Testis (tissue), 5 donors: ENCODE measurements at regions of chr4 and their contacts with region 1.

Region 1: GRCh38 chr4:53702334-53703266 is 111.3 kb upstream of the LNX1 start:
- DNase-seq: peak; percentile 85
- H3K4me3 ChIP-seq: no peak overlapping the region
- H3K27ac ChIP-seq: peak overlapping the region; percentile 45 to 51
- H3K4me1 ChIP-seq: peaks cover 17% of the 10 kb centered on the region
- H3K27me3 ChIP-seq: no peaks in the 10 kb centered on the region
- CTCF ChIP-seq: no peak
- POLR2A ChIP-seq: no peak

Region 2: DNA sequence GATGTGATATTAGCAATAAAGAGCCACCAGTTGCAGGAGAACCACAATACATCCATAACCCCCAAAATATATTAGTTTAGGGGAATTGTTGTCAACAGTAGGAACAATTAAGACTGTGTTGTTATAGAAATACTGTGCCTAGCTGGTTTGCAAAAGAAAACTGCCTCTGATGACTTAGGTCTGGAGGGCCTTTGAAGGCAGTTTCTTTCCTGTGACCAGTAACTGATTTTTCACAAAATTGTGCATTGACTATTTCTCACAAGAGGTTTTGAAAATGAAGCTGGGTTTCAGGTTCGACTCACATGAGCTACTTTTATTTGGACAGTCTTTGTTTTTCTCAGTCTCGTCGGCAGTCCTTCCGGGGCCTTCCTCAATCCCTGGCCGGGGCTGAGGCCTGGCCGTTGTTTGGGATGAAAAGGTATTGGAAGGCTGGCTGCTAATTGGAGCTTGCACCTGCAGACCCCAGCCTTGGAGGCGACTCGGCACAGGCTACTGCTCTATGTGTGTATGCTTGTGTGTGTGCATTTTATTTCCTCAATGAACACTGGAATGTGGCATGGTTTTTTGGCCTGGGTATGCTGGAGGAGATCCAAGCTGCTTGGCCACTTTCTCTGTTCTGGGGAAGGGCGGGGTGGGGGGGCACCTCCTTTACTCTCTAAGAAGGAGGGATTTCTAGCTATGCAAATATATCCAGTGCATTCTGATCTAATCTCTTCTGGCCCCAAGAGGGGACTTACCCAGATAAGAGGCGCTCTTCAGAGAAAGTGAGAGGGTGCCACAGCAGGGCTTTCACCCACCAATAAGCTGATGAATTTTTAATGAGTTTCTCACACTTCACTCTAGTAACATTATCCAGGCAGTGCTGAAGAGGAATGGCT is 61.8 kb before region 1 on chr4:
- intact Hi-C with region 1: no loop called
- DNase-seq: no peak
- H3K4me3 ChIP-seq: no peak overlapping the region
- H3K27ac ChIP-seq: no peak overlapping the region
- H3K4me1 ChIP-seq: no peaks in the 10 kb centered on the region
- H3K27me3 ChIP-seq: no peaks in the 10 kb centered on the region
- CTCF ChIP-seq: no peak
- POLR2A ChIP-seq: no peak

Region 3: DNA sequence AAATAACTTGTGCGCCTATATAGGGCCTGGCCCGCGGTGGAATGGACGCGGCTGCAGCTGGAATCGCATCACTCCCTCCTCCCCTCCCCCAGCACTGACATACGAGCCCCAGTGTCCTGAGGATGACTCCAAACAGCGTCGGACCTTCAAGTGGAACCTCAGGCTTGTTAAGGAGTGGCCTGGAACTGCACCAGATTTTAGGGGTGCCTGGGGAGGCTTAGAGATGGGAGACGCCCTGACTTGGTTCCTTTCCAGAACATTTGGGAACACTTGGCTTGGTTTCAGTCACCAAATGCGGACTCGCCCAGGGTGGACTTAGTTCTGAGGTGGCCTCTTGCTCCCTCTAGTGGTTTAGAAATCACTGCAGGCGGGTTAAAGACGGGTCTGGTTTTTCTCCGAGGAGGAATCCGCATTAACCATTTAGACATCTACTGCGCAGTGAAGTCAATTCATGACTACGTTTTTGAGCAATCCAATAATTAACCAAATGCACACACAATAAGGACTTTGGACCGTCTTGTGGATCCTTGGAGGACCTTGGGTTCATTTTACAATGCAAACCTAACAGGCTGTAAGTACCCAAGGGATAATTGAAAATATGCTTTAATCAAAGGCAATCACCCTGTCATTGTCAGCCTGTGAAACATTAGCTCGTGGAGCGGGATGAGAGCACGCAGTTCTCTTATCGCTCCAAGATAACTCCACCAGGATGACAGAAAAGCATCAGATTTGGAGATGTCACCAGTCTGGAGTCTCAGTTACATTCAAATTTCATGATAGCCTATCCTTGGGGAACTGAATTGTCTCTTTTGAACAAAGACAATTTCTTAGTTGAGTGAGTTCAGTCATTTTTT is 515.3 kb after region 1 on chr4:
- intact Hi-C with region 1: loop called (anchors 10 kb)
- DNase-seq: peak; percentile 91
- H3K4me3 ChIP-seq: peak overlapping the region; percentile 38 to 53
- H3K27ac ChIP-seq: no peak overlapping the region
- H3K4me1 ChIP-seq: no peaks in the 10 kb centered on the region
- H3K27me3 ChIP-seq: no peaks in the 10 kb centered on the region
- CTCF ChIP-seq: peak; percentile 87 to 92 (median 91)
- POLR2A ChIP-seq: no peak